H1 (cell line): ENCODE measurements at regions of chr1 and their contacts with region 1.

Region 1: DNA sequence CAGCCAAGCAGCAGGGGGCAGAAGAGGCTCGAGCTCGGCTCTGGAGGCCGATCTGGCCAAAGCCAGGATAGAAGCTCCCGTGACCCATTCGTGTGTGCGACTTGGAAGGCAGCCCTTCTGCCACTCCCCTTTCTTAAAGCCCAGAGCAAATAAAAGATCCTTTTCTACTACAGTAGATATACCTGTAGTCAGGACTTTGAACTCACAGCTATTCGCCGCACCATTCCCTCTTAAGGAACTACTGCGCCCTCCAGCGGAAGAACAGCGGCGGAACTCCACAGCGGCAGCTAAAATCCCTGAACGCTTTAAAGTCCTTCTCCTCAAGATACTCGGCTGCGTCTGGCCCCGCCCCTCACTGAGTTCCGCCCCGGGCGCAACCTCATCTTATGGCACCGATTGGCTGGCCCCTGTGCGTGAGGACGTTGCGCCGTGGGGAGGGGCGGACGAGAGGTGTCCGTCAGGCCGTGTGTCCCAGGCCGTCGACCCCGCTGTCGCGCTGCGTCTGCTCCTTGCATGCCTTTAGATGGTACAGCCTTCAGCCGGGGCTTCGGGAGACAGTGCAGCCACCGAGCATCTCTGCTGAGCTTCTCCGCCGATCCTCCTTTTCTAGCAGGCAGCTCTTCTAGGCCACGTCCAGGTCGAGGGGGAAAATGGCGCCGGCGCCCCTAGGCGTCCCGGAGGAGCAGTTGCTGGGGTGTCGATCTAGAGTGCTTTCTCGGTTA is at the start of gene LRIG2:
- DNase-seq: peak; percentile 98
- H3K4me3 ChIP-seq: peak within 1 kb of the TSS; percentile 52 to 97 (median 88)
- H3K27ac ChIP-seq: peak within 1 kb of the TSS; percentile 92
- H3K4me1 ChIP-seq: peaks cover 0 to 5% (median 2%) of the 10 kb centered on the region in 4 experiments; a peak in 4 of 7 replicates
- H3K27me3 ChIP-seq: no peaks in the 10 kb centered on the region
- CTCF ChIP-seq: peak; percentile 72 to 83 (median 76)
- EP300 ChIP-seq: no peak
- POLR2A ChIP-seq: peak; percentile 85 to 86
- RAD21 ChIP-seq: peak; percentile 75 to 80
- total RNA-seq, gene LRIG2: 20.4 and 20.9 TPM in 2 replicates

Region 2: DNA sequence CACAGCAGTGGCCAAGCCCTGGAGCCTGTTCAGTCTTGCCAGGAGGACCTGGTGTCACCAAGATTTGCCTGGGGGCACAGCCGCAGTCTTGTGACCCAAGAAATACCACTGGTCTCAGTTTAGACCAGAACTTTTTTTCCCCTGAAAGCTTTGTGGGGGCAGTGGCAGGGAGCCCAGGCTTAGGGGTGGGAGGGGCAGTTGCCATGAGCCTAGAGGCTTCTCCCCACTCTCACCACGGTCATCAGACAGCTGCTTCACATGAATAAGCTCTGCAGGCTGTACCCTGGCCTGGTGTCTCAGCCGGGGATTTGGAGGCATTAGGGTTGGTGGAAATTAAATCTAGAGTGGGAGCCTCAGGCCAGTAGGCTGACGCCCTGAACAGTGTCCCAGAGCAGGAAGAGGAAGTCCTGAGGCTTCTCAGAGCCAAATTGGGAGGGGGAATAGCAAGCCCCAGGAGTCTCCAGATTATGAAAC is 190.6 kb before region 1 on chr1:
- CTCF ChIA-PET with region 1: interaction called, 32 read pairs
- POLR2A ChIA-PET with region 1: no interaction called
- DNase-seq: no peak
- H3K4me3 ChIP-seq: no peak overlapping the region
- H3K27ac ChIP-seq: no peak overlapping the region
- H3K4me1 ChIP-seq: peaks cover 0 to 14% (median 5%) of the 10 kb centered on the region in 4 experiments; a peak in 4 of 7 replicates
- H3K27me3 ChIP-seq: no peaks in the 10 kb centered on the region
- CTCF ChIP-seq: no peak
- EP300 ChIP-seq: no peak
- POLR2A ChIP-seq: no peak
- RAD21 ChIP-seq: no peak

Region 3: GRCh38 chr1:112935461-112936289 is 137.2 kb before region 1 on chr1:
- CTCF ChIA-PET with region 1: interaction called, 10 read pairs
- POLR2A ChIA-PET with region 1: interaction called, 12 read pairs
- DNase-seq: no peak
- H3K4me3 ChIP-seq: no peak overlapping the region
- H3K27ac ChIP-seq: no peak overlapping the region
- H3K4me1 ChIP-seq: peaks cover 0 to 3% (median 1%) of the 10 kb centered on the region in 4 experiments; a peak in 3 of 7 replicates
- H3K27me3 ChIP-seq: no peaks in the 10 kb centered on the region
- CTCF ChIP-seq: no peak
- EP300 ChIP-seq: no peak
- POLR2A ChIP-seq: no peak
- RAD21 ChIP-seq: no peak

Region 4: GRCh38 chr1:113048064-113048463 is 24.9 kb before region 1 on chr1:
- CTCF ChIA-PET with region 1: interaction called, 50 read pairs
- POLR2A ChIA-PET with region 1: interaction called, 45 read pairs
- DNase-seq: no peak
- H3K4me3 ChIP-seq: no peak overlapping the region
- H3K27ac ChIP-seq: no peak overlapping the region
- H3K4me1 ChIP-seq: peaks cover 7 to 18% (median 18%) of the 10 kb centered on the region in 4 experiments; a peak in 6 of 7 replicates
- H3K27me3 ChIP-seq: no peaks in the 10 kb centered on the region
- CTCF ChIP-seq: no peak
- EP300 ChIP-seq: no peak
- POLR2A ChIP-seq: no peak
- RAD21 ChIP-seq: no peak

Region 5: DNA sequence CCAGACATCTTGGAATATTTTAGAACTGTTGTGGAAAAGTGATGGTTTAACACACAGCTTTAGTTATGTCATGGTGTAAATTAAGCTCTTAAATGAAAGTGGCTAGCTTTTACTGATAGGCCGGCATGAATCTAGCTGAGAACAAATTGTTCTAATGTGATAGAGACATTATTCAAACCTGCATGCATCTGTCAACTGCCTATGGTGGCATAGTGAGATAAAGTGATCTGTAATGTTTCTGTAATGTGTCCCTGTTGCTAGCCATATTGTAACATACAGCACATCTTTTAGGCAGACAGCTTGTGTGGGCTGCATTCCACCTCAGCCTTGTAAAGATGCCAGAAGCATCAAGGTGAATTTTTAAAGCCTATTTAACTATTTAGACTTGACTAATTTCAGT is 16.1 kb after region 1 on chr1:
- CTCF ChIA-PET with region 1: interaction called, 15 read pairs
- POLR2A ChIA-PET with region 1: interaction called, 16 read pairs
- DNase-seq: no peak
- H3K4me3 ChIP-seq: no peak overlapping the region
- H3K27ac ChIP-seq: no peak overlapping the region
- H3K4me1 ChIP-seq: no peaks in the 10 kb centered on the region
- H3K27me3 ChIP-seq: no peaks in the 10 kb centered on the region
- CTCF ChIP-seq: no peak
- EP300 ChIP-seq: no peak
- POLR2A ChIP-seq: no peak
- RAD21 ChIP-seq: no peak

Region 6: GRCh38 chr1:113325039-113325438 is 252.1 kb after region 1 on chr1:
- CTCF ChIA-PET with region 1: no interaction called
- POLR2A ChIA-PET with region 1: no interaction called
- DNase-seq: no peak
- H3K4me3 ChIP-seq: no peak overlapping the region
- H3K27ac ChIP-seq: no peak overlapping the region
- H3K4me1 ChIP-seq: no peaks in the 10 kb centered on the region
- H3K27me3 ChIP-seq: no peaks in the 10 kb centered on the region
- CTCF ChIP-seq: no peak
- EP300 ChIP-seq: no peak
- POLR2A ChIP-seq: no peak
- RAD21 ChIP-seq: no peak

Region 7: DNA sequence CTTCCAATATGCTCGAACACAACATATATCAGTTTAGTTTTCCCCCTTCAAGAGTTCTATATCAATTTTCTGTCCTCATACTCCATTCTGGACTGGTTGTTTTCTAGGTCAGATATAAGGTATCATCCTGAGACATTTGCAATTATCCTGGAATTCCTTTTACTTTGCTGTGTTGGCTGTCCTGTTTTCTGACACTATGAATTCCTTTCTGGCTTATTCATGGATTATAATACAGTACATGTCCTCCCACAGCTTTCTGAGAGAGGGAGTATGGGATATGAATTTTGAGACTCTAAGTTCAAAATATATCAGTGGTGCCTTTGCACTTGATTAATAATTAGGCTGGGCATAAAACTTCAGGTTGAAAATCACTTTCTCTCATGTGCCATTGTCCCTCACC is 674.5 kb after region 1 on chr1:
- CTCF ChIA-PET with region 1: no interaction called
- POLR2A ChIA-PET with region 1: no interaction called
- DNase-seq: no peak
- H3K4me3 ChIP-seq: no peak overlapping the region
- H3K27ac ChIP-seq: no peak overlapping the region
- H3K4me1 ChIP-seq: no peaks in the 10 kb centered on the region
- H3K27me3 ChIP-seq: no peaks in the 10 kb centered on the region
- CTCF ChIP-seq: no peak
- EP300 ChIP-seq: no peak
- POLR2A ChIP-seq: no peak
- RAD21 ChIP-seq: no peak